GM12878 (cell line): ENCODE measurements at regions of chr3 and their contacts with region 1.

Region 1: DNA sequence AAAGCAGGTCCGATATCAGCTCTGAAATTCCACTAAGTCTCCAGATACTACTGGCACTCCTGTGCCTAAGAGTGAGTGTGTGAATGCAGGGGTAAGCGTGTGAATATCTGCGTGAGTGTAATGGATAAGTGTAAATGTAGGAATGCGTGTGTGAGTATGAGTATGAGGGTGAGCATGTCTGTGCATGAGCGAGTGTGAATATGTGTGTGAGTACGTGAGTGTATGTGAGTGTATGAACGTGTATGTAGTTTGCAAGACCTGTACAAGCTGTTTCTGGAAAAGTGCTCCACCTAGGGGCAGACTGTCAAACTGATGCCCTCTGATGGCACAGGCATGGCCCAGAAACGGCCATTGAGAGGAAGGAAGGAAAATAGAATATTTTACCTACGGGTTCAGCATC is 24.4 kb upstream of the FRMD4B start:
- DNase-seq: peak; percentile 61
- ATAC-seq: peak; percentile 100
- H3K4me3 ChIP-seq: no peak overlapping the region
- H3K27ac ChIP-seq: no peak overlapping the region
- H3K4me1 ChIP-seq: no peaks in the 10 kb centered on the region
- H3K27me3 ChIP-seq: no peaks in the 10 kb centered on the region
- CTCF ChIP-seq: peak; percentile 85 to 92 (median 86)
- EP300 ChIP-seq: no peak
- POLR2A ChIP-seq: no peak
- RAD21 ChIP-seq: peak; percentile 76

Region 2: DNA sequence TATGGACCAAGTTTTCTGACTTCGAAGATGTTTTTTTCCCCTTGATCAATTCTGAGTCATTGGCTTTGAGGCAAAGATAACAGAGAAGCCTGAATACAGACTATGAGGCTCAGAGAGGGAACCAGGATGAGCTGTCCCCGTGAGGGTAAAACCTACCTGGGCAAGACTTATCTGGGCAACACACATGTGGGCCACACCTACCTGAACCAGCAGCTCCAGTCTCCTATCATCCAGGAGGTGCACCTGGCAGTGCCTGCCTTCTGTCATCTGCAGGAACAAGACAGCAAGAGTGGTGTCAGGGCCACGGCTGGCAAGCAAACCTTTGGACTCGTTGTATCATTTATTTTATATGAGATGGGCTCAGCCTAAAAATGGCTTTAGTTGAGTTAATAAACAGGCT is 97.0 kb before region 1 on chr3:
- CTCF ChIA-PET with region 1: interaction called, 95 read pairs
- POLR2A ChIA-PET with region 1: no interaction called
- RAD21 ChIA-PET with region 1: interaction called, 13 read pairs
- SMC1A ChIA-PET with region 1: interaction called, 37 read pairs
- in situ Hi-C with region 1: no loop called
- intact Hi-C with region 1: no loop called
- DNase-seq: no peak
- ATAC-seq: no peak
- H3K4me3 ChIP-seq: no peak overlapping the region
- H3K27ac ChIP-seq: no peak overlapping the region
- H3K4me1 ChIP-seq: no peaks in the 10 kb centered on the region
- H3K27me3 ChIP-seq: no peaks in the 10 kb centered on the region
- CTCF ChIP-seq: no peak
- EP300 ChIP-seq: no peak
- POLR2A ChIP-seq: no peak
- RAD21 ChIP-seq: no peak

Region 3: DNA sequence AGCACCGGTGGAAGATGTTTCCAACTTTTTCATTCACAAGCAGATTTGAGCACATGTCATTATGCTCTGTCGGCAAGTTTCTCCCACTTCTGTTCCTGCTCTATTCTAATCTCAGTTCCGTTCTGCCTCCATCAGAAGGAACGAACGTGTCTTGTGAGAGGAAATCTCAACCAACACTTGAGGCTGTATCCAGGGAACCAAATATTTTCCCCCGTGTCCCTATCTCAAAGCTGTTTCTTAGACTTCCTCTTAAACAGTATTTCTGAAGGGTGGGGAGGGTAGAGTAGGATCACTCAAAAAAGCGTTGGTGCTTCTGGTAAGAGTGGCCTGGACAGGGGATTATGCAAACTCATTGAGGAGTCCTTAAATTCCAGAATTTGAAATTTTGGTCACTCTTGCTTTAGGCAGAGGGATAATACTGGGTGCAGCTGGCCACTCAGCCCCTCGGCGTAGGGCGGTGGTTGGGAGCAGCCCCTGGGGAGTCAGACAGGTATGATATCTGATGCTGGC is 79.3 kb before region 1 on chr3:
- CTCF ChIA-PET with region 1: interaction called, 59 read pairs
- POLR2A ChIA-PET with region 1: interaction called, 3 read pairs
- RAD21 ChIA-PET with region 1: interaction called, 83 read pairs
- SMC1A ChIA-PET with region 1: interaction called, 111 read pairs
- in situ Hi-C with region 1: no loop called
- intact Hi-C with region 1: no loop called
- DNase-seq: no peak
- ATAC-seq: no peak
- H3K4me3 ChIP-seq: no peak overlapping the region
- H3K27ac ChIP-seq: no peak overlapping the region
- H3K4me1 ChIP-seq: peaks cover 12% of the 10 kb centered on the region
- H3K27me3 ChIP-seq: no peaks in the 10 kb centered on the region
- CTCF ChIP-seq: no peak
- EP300 ChIP-seq: no peak
- POLR2A ChIP-seq: no peak
- RAD21 ChIP-seq: no peak

Region 4: GRCh38 chr3:69379661-69380060 is 30.6 kb before region 1 on chr3:
- CTCF ChIA-PET with region 1: interaction called, 18 read pairs
- POLR2A ChIA-PET with region 1: no interaction called
- RAD21 ChIA-PET with region 1: no interaction called
- SMC1A ChIA-PET with region 1: interaction called, 8 read pairs
- in situ Hi-C with region 1: no loop called
- intact Hi-C with region 1: no loop called
- DNase-seq: no peak
- ATAC-seq: no peak
- H3K4me3 ChIP-seq: no peak overlapping the region
- H3K27ac ChIP-seq: no peak overlapping the region
- H3K4me1 ChIP-seq: no peaks in the 10 kb centered on the region
- H3K27me3 ChIP-seq: no peaks in the 10 kb centered on the region; a peak in 1 of 4 replicates
- CTCF ChIP-seq: no peak
- EP300 ChIP-seq: no peak
- POLR2A ChIP-seq: no peak
- RAD21 ChIP-seq: no peak

Region 5: DNA sequence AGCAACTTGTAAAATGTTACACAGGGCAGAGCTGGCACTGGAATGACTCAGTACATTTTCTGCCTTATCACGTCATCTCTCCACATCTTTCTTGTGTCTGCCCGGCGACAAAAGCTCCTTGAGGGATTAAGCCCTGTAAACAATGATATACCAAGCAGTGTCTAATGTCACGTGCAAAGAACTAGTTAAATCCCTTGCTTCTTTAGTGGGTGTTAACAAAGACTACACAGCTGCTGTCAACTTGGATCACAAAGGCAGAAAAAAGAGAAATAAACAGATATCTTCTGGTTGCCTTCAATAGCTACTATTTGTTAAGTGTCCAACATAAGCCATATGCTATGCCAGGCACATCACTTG is 23.7 kb after region 1 on chr3:
- CTCF ChIA-PET with region 1: interaction called, 10 read pairs
- POLR2A ChIA-PET with region 1: interaction called, 4 read pairs
- RAD21 ChIA-PET with region 1: no interaction called
- SMC1A ChIA-PET with region 1: interaction called, 46 read pairs
- in situ Hi-C with region 1: no loop called
- intact Hi-C with region 1: no loop called
- DNase-seq: no peak
- ATAC-seq: peak; percentile 70
- H3K4me3 ChIP-seq: no peak overlapping the region
- H3K27ac ChIP-seq: no peak overlapping the region
- H3K4me1 ChIP-seq: peaks cover 9% of the 10 kb centered on the region
- H3K27me3 ChIP-seq: no peaks in the 10 kb centered on the region; a peak in 1 of 4 replicates
- CTCF ChIP-seq: no peak
- EP300 ChIP-seq: no peak
- POLR2A ChIP-seq: no peak
- RAD21 ChIP-seq: no peak